ENCODE measurements at regions of chr2 and their contacts with region 1.

Region 1: GRCh38 chr2:113889471-113890252 is at the start of gene ACTR3:
- DNase-seq: peak; percentile 98
- ATAC-seq: peak; percentile 98 to 99 (median 98)
- H3K4me3 ChIP-seq: peak within 1 kb of the TSS; percentile 78 to 98 (median 96)
- H3K27ac ChIP-seq: peak within 1 kb of the TSS; percentile 81 to 100 (median 98)
- H3K4me1 ChIP-seq: peaks cover 3 to 75% (median 61%) of the 10 kb centered on the region in 9 donors
- H3K27me3 ChIP-seq: no peaks in the 10 kb centered on the region
- CTCF ChIP-seq: peak in 3 of 9 donors; percentile 17 to 31 (median 23)
- total RNA-seq, gene ACTR3: 97.0 to 167 (median 116) TPM

Region 2: GRCh38 chr2:113756355-113757137 is 133.1 kb before region 1 on chr2 and contains the start of gene SLC35F5:
- intact Hi-C with region 1: loop called in 8 of 10 experiments (anchors 1 to 5 kb)
- DNase-seq: peak; percentile 91 to 95
- ATAC-seq: peak; percentile 97 to 99 (median 98)
- H3K4me3 ChIP-seq: peak within 1 kb of the TSS; percentile 65 to 96 (median 84)
- H3K27ac ChIP-seq: peak within 1 kb of the TSS; percentile 86 to 97 (median 93)
- H3K4me1 ChIP-seq: peaks cover 0 to 48% (median 24%) of the 10 kb centered on the region in 9 donors
- H3K27me3 ChIP-seq: no peaks in the 10 kb centered on the region
- CTCF ChIP-seq: no peak
- total RNA-seq, gene SLC35F5: 52.9 to 67.1 (median 59.2) TPM

Region 3: DNA sequence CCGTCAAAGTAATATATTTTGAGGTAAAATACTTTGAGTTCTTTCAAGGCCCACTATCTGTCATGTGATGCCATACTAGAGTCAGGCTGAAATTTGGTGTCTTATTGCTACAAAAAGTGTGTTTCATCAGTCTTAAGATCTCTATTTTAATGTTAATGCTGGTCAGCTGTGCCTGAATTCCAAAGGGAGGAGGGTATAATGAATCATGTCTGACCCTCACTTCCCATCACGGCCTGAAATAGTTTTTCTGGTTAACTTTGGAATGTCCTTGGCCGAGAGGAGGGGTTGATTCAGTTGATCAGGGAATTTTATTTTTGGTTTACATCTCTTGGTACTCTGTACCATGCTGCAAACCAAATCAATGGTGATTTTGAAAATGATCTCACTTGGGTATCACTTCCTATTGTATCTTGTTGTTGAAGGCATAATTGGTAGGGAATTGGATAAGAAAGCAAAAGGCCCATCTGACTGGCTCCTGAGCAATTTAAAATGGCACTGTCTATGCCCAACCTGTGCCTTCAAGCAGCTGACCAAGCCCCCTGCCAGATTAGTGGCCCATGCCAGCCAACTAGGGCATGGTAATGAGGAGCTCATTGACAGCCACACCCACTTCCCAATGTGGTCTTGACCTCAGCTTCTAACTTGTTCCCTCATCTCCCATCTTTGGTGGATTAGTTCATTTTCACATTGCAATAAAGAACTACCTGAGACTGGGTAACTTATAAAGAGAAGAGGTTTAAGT is 127.1 kb before region 1 on chr2:
- intact Hi-C with region 1: loop called in 7 of 10 experiments (anchors 1 to 5 kb)
- DNase-seq: no peak
- ATAC-seq: peak in 1 of 8 donors; percentile 38
- H3K4me3 ChIP-seq: no peak overlapping the region
- H3K27ac ChIP-seq: peak overlapping the region in 2 of 10 donors; percentile 20 to 48
- H3K4me1 ChIP-seq: peaks cover 0 to 19% (median 1%) of the 10 kb centered on the region in 9 donors
- H3K27me3 ChIP-seq: no peaks in the 10 kb centered on the region
- CTCF ChIP-seq: no peak

Region 4: DNA sequence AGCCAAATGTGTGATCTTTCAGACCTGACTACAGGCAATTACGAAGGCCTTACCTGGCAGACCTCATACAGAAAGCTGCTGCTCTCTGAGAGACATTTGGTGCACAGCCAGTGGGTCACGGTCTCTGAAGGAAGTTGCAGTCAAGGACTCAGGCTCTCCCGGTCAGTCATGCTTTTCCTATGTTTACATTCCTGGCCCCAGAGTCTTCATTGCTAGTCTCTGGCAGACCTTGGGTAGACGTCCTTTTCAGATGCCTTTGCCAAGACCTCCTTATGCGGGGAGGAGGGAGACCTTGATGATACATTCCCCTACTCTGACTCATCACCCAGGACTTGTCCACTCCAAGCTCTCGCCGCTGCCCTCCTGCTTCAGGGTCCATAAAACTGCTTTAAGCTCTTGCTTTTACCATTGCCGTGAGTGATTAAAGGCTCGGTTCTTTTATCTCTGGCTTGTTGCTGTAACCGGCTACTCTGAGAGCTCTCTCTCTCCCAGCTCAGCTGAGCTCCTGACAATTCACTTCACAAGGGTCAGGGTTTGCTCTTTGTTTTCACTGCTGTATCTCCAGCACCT is 71.2 kb before region 1 on chr2:
- intact Hi-C with region 1: loop called in 2 of 10 experiments (anchors 2 to 5 kb)
- DNase-seq: peak in 1 of 2 donors; percentile 33
- ATAC-seq: peak; percentile 72 to 97 (median 90)
- H3K4me3 ChIP-seq: peak overlapping the region in 7 of 10 donors; percentile 2 to 40 (median 28)
- H3K27ac ChIP-seq: peak overlapping the region; percentile 20 to 85 (median 69)
- H3K4me1 ChIP-seq: peaks cover 0 to 15% (median 6%) of the 10 kb centered on the region in 9 donors
- H3K27me3 ChIP-seq: no peaks in the 10 kb centered on the region
- CTCF ChIP-seq: no peak

Region 5: GRCh38 chr2:113848758-113849415 is 40.8 kb before region 1 on chr2:
- intact Hi-C with region 1: no loop called
- DNase-seq: no peak
- ATAC-seq: no peak
- H3K4me3 ChIP-seq: no peak overlapping the region
- H3K27ac ChIP-seq: no peak overlapping the region
- H3K4me1 ChIP-seq: peaks cover 0 to 17% (median 0%) of the 10 kb centered on the region in 9 donors
- H3K27me3 ChIP-seq: no peaks in the 10 kb centered on the region
- CTCF ChIP-seq: no peak

Region 6: GRCh38 chr2:113930448-113930847 is 40.8 kb after region 1 on chr2:
- intact Hi-C with region 1: loop called in 1 of 10 experiments (anchors 5 kb)
- DNase-seq: no peak
- ATAC-seq: no peak
- H3K4me3 ChIP-seq: no peak overlapping the region
- H3K27ac ChIP-seq: no peak overlapping the region
- H3K4me1 ChIP-seq: peaks cover 0 to 8% (median 0%) of the 10 kb centered on the region in 9 donors
- H3K27me3 ChIP-seq: no peaks in the 10 kb centered on the region
- CTCF ChIP-seq: no peak

Region 7: GRCh38 chr2:113959202-113959601 is 69.5 kb after region 1 on chr2:
- intact Hi-C with region 1: loop called in 1 of 10 experiments (anchors 10 kb)
- DNase-seq: no peak
- ATAC-seq: no peak
- H3K4me3 ChIP-seq: no peak overlapping the region
- H3K27ac ChIP-seq: no peak overlapping the region
- H3K4me1 ChIP-seq: no peaks in the 10 kb centered on the region
- H3K27me3 ChIP-seq: no peaks in the 10 kb centered on the region
- CTCF ChIP-seq: no peak

Region 8: GRCh38 chr2:114083717-114084387 is 194.2 kb after region 1 on chr2:
- intact Hi-C with region 1: no loop called
- DNase-seq: no peak
- ATAC-seq: no peak
- H3K4me3 ChIP-seq: no peak overlapping the region
- H3K27ac ChIP-seq: no peak overlapping the region
- H3K4me1 ChIP-seq: no peaks in the 10 kb centered on the region
- H3K27me3 ChIP-seq: peaks cover 0 to 5% (median 0%) of the 10 kb centered on the region in 7 donors
- CTCF ChIP-seq: no peak